ENCODE measurements at regions of chr10 and their contacts with region 1.

Region 1: DNA sequence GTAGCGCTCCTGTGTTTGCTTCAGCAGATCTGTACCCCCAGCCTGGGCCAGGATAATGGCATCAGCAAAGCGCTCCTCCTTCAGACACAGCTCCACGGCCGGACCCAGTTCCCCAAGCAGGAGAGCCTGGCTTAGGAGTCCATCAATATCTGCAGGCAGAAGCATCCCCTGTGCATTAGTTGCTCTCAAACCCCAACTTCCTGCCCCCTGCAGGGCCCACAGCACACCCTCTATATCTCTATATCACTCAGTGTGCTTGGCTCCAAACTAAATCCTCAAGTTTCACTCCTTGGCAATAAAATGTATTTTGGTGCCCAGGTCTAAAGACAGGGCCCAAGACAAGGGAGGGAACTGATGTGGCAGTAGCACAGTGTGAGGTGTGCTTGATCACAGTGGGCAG is 21.6 kb downstream of the SEC31B start:
- DNase-seq: no peak
- H3K4me3 Mint-ChIP-seq: peak overlapping the region; percentile 31
- H3K27ac Mint-ChIP-seq: peak overlapping the region; percentile 61
- H3K4me1 Mint-ChIP-seq: peaks cover 62% of the 10 kb centered on the region
- H3K27me3 Mint-ChIP-seq: no peaks in the 10 kb centered on the region

Region 2: GRCh38 chr10:100481462-100482081 is 16.5 kb before region 1 on chr10:
- intact Hi-C with region 1: loop called (anchors 2 kb)
- DNase-seq: peak; percentile 88
- H3K4me3 Mint-ChIP-seq: peak overlapping the region; percentile 78
- H3K27ac Mint-ChIP-seq: no peak overlapping the region
- H3K4me1 Mint-ChIP-seq: peaks cover 26% of the 10 kb centered on the region
- H3K27me3 Mint-ChIP-seq: peaks cover 9% of the 10 kb centered on the region

Region 3: GRCh38 chr10:100551196-100551595 is 53.1 kb after region 1 on chr10:
- intact Hi-C with region 1: no loop called
- DNase-seq: no peak
- H3K4me3 Mint-ChIP-seq: no peak overlapping the region
- H3K27ac Mint-ChIP-seq: no peak overlapping the region
- H3K4me1 Mint-ChIP-seq: no peaks in the 10 kb centered on the region
- H3K27me3 Mint-ChIP-seq: no peaks in the 10 kb centered on the region

Measured in activated T-helper 2 cell treated with anti-CD3 and anti-CD28 coated beads, Interferon-gamma antibody, Interleukin-2, Interleukin-4, amounts not matched to agents 10 μg/mL and 5 μg/mL and 100 μg/mL, durations not matched to agents 14 hours and 24 hours and 36 hours (primary cell).